PC-9 (cell line): ENCODE measurements at regions of chr2 and their contacts with region 1.

Region 1: DNA sequence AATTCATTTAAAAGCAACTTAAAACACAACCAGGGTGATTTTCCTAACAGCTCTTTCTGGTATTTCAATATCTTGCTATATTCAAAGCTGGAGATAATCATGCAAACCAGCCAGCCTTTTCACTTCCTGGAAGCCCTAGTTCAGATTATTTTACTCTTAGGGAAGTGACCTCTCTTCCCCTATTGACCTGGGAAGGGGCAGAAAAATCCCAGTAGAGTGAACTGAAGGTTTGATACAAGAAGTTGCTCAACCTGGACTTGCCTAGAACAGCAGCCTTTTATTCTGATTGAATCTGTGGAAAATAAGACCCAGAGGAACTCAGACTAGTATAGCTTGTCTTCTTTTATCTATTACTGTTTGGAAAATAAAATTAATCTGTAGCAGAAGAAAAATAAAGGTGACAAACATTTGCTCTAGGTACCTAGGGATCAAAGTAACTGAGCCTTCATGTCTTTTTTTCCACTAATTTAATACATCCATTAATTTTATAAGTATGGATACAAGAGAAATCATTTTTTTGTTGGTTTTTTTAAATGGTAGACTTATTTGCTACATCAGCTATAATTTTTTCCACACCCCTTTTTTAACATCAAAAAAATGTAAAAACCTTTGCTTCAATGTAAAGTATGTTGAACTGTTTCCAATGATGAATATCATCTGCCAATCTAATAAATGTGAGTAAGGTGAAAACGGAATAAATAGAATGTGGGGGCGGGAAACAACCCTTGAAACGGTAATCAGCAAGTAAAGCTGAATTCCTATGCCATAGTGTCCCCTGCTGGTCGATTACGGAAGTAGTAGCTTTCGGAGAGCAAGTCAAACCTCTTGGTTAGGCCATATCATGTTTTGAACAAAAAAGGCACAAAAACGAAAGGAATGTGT is 629.9 kb downstream of the NRXN1 start:
- DNase-seq: peak in 1 of 2 experiments; percentile 20
- H3K4me3 ChIP-seq: no peak overlapping the region
- H3K27ac ChIP-seq: no peak overlapping the region
- H3K4me1 ChIP-seq: no peaks in the 10 kb centered on the region
- H3K27me3 ChIP-seq: no peaks in the 10 kb centered on the region
- CTCF ChIP-seq: peak; percentile 92

Region 2: GRCh38 chr2:49616800-49617199 is 785.2 kb before region 1 on chr2:
- CTCF ChIA-PET with region 1: no interaction called
- POLR2A ChIA-PET with region 1: no interaction called
- intact Hi-C with region 1: loop called (anchors 2 kb)
- DNase-seq: no peak
- H3K4me3 ChIP-seq: no peak overlapping the region
- H3K27ac ChIP-seq: no peak overlapping the region
- H3K4me1 ChIP-seq: no peaks in the 10 kb centered on the region
- H3K27me3 ChIP-seq: peaks cover 6% of the 10 kb centered on the region; the same call in 1 of the 2 replicates
- CTCF ChIP-seq: peak; percentile 68

Region 3: GRCh38 chr2:49687918-49688317 is 714.1 kb before region 1 on chr2:
- CTCF ChIA-PET with region 1: no interaction called
- POLR2A ChIA-PET with region 1: no interaction called
- intact Hi-C with region 1: loop called (anchors 5 kb)
- DNase-seq: no peak
- H3K4me3 ChIP-seq: no peak overlapping the region
- H3K27ac ChIP-seq: no peak overlapping the region
- H3K4me1 ChIP-seq: no peaks in the 10 kb centered on the region
- H3K27me3 ChIP-seq: no peaks in the 10 kb centered on the region
- CTCF ChIP-seq: peak; percentile 69

Region 4: GRCh38 chr2:50591642-50592041 is 189.6 kb after region 1 on chr2:
- CTCF ChIA-PET with region 1: no interaction called
- POLR2A ChIA-PET with region 1: no interaction called
- intact Hi-C with region 1: no loop called
- DNase-seq: no peak
- H3K4me3 ChIP-seq: no peak overlapping the region
- H3K27ac ChIP-seq: no peak overlapping the region
- H3K4me1 ChIP-seq: no peaks in the 10 kb centered on the region
- H3K27me3 ChIP-seq: peaks cover 11% of the 10 kb centered on the region
- CTCF ChIP-seq: no peak